CD4-positive, alpha-beta T cell (primary cell): ENCODE measurements at regions of chr2 and their contacts with region 1.

Region 1: GRCh38 chr2:52414561-52415295 is 1352.9 kb upstream of the CHAC2 start:
- DNase-seq: no peak
- ATAC-seq: no peak
- H3K4me3 ChIP-seq: no peak overlapping the region
- H3K4me3 Mint-ChIP-seq: no peak overlapping the region
- H3K27ac ChIP-seq: no peak overlapping the region
- H3K27ac Mint-ChIP-seq: no peak overlapping the region
- H3K4me1 ChIP-seq: no peaks in the 10 kb centered on the region
- H3K4me1 Mint-ChIP-seq: no peaks in the 10 kb centered on the region
- H3K27me3 ChIP-seq: no peaks in the 10 kb centered on the region
- H3K27me3 Mint-ChIP-seq: no peaks in the 10 kb centered on the region
- CTCF ChIP-seq: no peak

Region 2: DNA sequence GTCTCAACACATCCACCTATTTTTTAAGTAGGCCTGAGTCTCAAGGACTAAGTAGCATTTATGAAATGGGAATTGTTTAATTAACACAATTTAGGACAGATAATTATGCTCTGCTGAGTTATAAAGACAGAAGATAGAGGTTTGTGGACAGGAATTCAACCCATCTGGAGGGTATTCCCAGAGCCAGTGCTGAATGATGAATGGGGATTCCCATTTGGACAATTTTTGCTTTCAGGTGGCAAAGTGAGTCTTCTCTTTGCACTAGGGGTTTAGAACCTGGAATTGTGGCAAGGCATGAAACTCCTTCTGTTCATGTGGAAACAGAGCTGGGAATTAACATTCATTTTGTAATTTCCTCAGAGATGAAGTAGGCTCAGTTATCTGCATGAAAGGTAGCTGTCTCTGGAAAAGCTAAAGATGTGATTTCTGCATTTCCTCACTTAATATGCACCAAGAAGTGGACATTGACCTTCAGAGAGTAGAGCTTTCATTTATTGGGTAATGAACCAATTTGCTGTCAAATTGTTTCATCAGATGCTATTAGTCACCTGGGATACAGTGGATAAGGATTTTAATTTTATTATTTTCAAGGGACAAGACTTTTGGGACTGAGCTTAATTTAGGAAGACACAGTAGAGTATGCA is 1170.7 kb before region 1 on chr2:
- CTCF ChIA-PET with region 1: no interaction called
- POLR2A ChIA-PET with region 1: no interaction called
- intact Hi-C with region 1: loop called in 1 of 2 experiments (anchors 5 kb)
- DNase-seq: no peak
- ATAC-seq: no peak
- H3K4me3 ChIP-seq: no peak overlapping the region
- H3K4me3 Mint-ChIP-seq: no peak overlapping the region
- H3K27ac ChIP-seq: no peak overlapping the region
- H3K27ac Mint-ChIP-seq: no peak overlapping the region
- H3K4me1 ChIP-seq: no peaks in the 10 kb centered on the region
- H3K4me1 Mint-ChIP-seq: no peaks in the 10 kb centered on the region
- H3K27me3 ChIP-seq: no peaks in the 10 kb centered on the region
- H3K27me3 Mint-ChIP-seq: no peaks in the 10 kb centered on the region
- CTCF ChIP-seq: no peak

Region 3: DNA sequence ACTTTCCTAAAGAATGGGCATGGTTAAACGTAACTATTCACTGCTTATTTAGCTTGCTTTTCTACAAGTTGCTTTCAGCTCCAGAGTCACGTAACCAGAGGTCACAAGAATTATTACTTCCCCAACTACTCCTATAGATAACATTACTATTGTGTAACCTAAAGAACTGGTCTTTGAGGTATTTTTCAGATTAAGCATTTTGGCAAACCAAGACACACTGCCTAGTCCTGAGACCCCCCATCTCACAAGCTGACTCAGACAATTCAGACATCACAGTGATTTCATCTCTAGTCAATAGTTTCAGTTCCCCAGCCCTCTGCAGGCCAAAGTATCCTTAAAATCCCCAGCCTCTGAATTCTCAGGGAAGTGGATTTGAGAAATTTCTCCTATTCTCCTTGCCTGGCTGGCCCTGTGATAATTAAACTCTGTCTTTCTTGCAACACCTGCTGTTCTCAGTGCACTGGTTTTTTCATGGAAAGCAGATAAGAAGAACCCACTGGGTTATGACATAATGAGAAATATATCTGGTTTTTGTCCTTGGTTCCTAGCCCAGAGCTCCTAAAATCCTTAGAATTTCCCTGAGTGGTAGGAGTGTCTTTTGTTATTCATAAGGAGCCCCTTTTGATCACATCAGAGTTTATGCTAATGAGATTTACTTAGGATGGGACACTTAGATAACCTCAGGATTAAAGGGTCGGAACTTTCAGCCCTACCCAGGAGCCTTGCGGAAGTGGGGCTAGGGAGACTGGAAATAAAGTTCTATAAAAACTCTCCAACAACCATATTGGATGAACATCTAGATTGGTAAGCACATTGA is 42.0 kb after region 1 on chr2:
- CTCF ChIA-PET with region 1: no interaction called
- POLR2A ChIA-PET with region 1: no interaction called
- intact Hi-C with region 1: no loop called
- DNase-seq: no peak
- ATAC-seq: no peak
- H3K4me3 ChIP-seq: no peak overlapping the region
- H3K4me3 Mint-ChIP-seq: no peak overlapping the region
- H3K27ac ChIP-seq: no peak overlapping the region
- H3K27ac Mint-ChIP-seq: no peak overlapping the region
- H3K4me1 ChIP-seq: no peaks in the 10 kb centered on the region
- H3K4me1 Mint-ChIP-seq: no peaks in the 10 kb centered on the region
- H3K27me3 ChIP-seq: no peaks in the 10 kb centered on the region
- H3K27me3 Mint-ChIP-seq: no peaks in the 10 kb centered on the region
- CTCF ChIP-seq: no peak

Region 4: GRCh38 chr2:52831216-52831615 is 416.5 kb after region 1 on chr2:
- CTCF ChIA-PET with region 1: no interaction called
- POLR2A ChIA-PET with region 1: no interaction called
- intact Hi-C with region 1: no loop called
- DNase-seq: no peak
- ATAC-seq: no peak
- H3K4me3 ChIP-seq: no peak overlapping the region
- H3K4me3 Mint-ChIP-seq: no peak overlapping the region
- H3K27ac ChIP-seq: no peak overlapping the region
- H3K27ac Mint-ChIP-seq: no peak overlapping the region
- H3K4me1 ChIP-seq: no peaks in the 10 kb centered on the region
- H3K4me1 Mint-ChIP-seq: no peaks in the 10 kb centered on the region
- H3K27me3 ChIP-seq: no peaks in the 10 kb centered on the region
- H3K27me3 Mint-ChIP-seq: no peaks in the 10 kb centered on the region
- CTCF ChIP-seq: no peak